CD4-positive, alpha-beta memory T cell (primary cell): ENCODE measurements at regions of chr1 and their contacts with region 1.

Region 1: GRCh38 chr1:160098852-160099561 is 588 bp upstream of the IGSF8 start:
- DNase-seq: peak; percentile 95 to 98 (median 95)
- H3K4me3 ChIP-seq: peak overlapping the region; percentile 74
- H3K4me3 Mint-ChIP-seq: peak overlapping the region; percentile 78 to 87 (median 82)
- H3K27ac ChIP-seq: peak overlapping the region; percentile 96
- H3K27ac Mint-ChIP-seq: peak overlapping the region; percentile 93 to 98 (median 97)
- H3K4me1 ChIP-seq: peaks cover 55% of the 10 kb centered on the region
- H3K4me1 Mint-ChIP-seq: peaks cover 24 to 63% (median 46%) of the 10 kb centered on the region in 4 donors
- H3K27me3 ChIP-seq: no peaks in the 10 kb centered on the region
- H3K27me3 Mint-ChIP-seq: peaks cover 0 to 2% of the 10 kb centered on the region in 2 donors

Region 2: GRCh38 chr1:159780583-159781582 is 318.1 kb before region 1 on chr1 and contains the start of gene DUSP23:
- CTCF ChIA-PET with region 1: no interaction called
- POLR2A ChIA-PET with region 1: no interaction called
- intact Hi-C with region 1: loop called (anchors 1 kb)
- DNase-seq: peak; percentile 96 to 97 (median 97)
- H3K4me3 ChIP-seq: peak within 1 kb of the TSS; percentile 39 to 57
- H3K4me3 Mint-ChIP-seq: peak within 1 kb of the TSS; percentile 83 to 93 (median 87)
- H3K27ac ChIP-seq: peak within 1 kb of the TSS; percentile 61
- H3K27ac Mint-ChIP-seq: peak within 1 kb of the TSS; percentile 81 to 96 (median 92)
- H3K4me1 ChIP-seq: peaks cover 16% of the 10 kb centered on the region
- H3K4me1 Mint-ChIP-seq: peaks cover 14 to 55% (median 36%) of the 10 kb centered on the region in 4 donors
- H3K27me3 ChIP-seq: no peaks in the 10 kb centered on the region
- H3K27me3 Mint-ChIP-seq: no peaks in the 10 kb centered on the region
- total RNA-seq, gene DUSP23: 14.5 to 15.7 TPM

Region 3: DNA sequence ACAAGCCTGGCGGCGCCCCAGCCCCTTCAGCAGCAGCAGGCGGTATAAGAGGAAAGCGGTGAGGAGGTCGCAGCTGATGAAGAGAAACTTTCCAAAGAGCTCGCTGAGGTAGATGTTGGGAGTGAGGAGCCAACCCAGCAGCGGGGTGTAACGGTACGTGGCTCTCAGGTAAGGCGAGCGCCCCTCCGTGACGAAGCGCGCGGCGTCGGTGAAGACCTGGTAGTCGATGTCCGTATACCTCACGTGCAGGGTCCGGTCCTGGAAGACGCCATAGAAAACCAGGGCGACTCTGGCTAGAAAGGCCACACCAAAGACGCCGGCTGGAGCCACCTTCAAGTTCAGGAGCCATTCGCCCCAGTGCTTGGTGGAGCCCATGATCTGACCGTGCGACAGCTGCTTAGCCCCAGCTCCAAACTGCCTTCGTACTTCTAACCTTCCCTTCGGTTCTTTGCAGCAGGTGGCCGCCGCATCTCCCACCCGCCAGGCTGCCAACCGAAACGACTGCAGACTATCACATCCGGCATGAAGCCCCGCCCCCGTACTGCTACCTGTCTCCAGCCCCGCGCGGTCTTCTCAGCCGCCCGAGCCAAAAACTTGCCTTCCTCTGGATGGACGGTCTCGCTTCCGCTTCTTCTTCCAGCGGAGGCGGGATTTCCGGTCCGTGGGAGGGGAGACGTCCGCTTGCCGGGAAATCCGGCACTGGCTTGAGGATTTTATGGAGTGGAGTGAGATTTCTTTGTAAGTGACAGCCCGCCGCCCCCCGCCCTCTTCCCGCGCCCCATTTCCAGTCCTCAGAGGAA is 67.4 kb before region 1 on chr1 and contains the start of gene PIGM:
- CTCF ChIA-PET with region 1: no interaction called
- POLR2A ChIA-PET with region 1: interaction called, 16 read pairs
- intact Hi-C with region 1: loop called (anchors 5 kb)
- DNase-seq: peak; percentile 89 to 96 (median 91)
- H3K4me3 ChIP-seq: peak within 1 kb of the TSS; percentile 71 to 79
- H3K4me3 Mint-ChIP-seq: peak within 1 kb of the TSS; percentile 94 to 99 (median 98)
- H3K27ac ChIP-seq: peak within 1 kb of the TSS; percentile 57
- H3K27ac Mint-ChIP-seq: peak within 1 kb of the TSS; percentile 89 to 98 (median 97)
- H3K4me1 ChIP-seq: peaks cover 32% of the 10 kb centered on the region
- H3K4me1 Mint-ChIP-seq: peaks cover 27 to 42% (median 33%) of the 10 kb centered on the region in 4 donors
- H3K27me3 ChIP-seq: no peaks in the 10 kb centered on the region
- H3K27me3 Mint-ChIP-seq: no peaks in the 10 kb centered on the region
- total RNA-seq, gene PIGM: 11.7 to 12.3 TPM

Region 4: GRCh38 chr1:160085686-160086455 is 13.1 kb before region 1 on chr1:
- CTCF ChIA-PET with region 1: interaction called, 83 read pairs
- POLR2A ChIA-PET with region 1: interaction called, 51 read pairs
- intact Hi-C with region 1: loop called (anchors 1 kb)
- DNase-seq: peak; percentile 66 to 68 (median 67)
- H3K4me3 ChIP-seq: no peak overlapping the region
- H3K4me3 Mint-ChIP-seq: peak overlapping the region in 3 of 8 donors; percentile 6 to 70 (median 45)
- H3K27ac ChIP-seq: no peak overlapping the region
- H3K27ac Mint-ChIP-seq: peak overlapping the region in 6 of 7 donors; percentile 51 to 88 (median 78)
- H3K4me1 ChIP-seq: peaks cover 3% of the 10 kb centered on the region
- H3K4me1 Mint-ChIP-seq: peaks cover 8 to 28% (median 19%) of the 10 kb centered on the region in 4 donors
- H3K27me3 ChIP-seq: peaks cover 18% of the 10 kb centered on the region
- H3K27me3 Mint-ChIP-seq: peaks cover 16 to 18% of the 10 kb centered on the region in 2 donors

Region 5: GRCh38 chr1:160251687-160252526 is 152.9 kb after region 1 on chr1:
- CTCF ChIA-PET with region 1: interaction called, 45 read pairs
- POLR2A ChIA-PET with region 1: interaction called, 4 read pairs
- intact Hi-C with region 1: loop called (anchors 1 kb)
- DNase-seq: peak; percentile 52 to 72 (median 56)
- H3K4me3 ChIP-seq: no peak overlapping the region
- H3K4me3 Mint-ChIP-seq: no peak overlapping the region
- H3K27ac ChIP-seq: no peak overlapping the region
- H3K27ac Mint-ChIP-seq: peak overlapping the region; percentile 2 to 90 (median 79)
- H3K4me1 ChIP-seq: peaks cover 12% of the 10 kb centered on the region
- H3K4me1 Mint-ChIP-seq: peaks cover 15 to 20% (median 18%) of the 10 kb centered on the region in 4 donors
- H3K27me3 ChIP-seq: no peaks in the 10 kb centered on the region
- H3K27me3 Mint-ChIP-seq: no peaks in the 10 kb centered on the region

Region 6: GRCh38 chr1:160284782-160285344 is 185.9 kb after region 1 on chr1 and contains the start of gene PEX19:
- CTCF ChIA-PET with region 1: interaction called, 6 read pairs
- POLR2A ChIA-PET with region 1: interaction called, 13 read pairs
- intact Hi-C with region 1: no loop called
- DNase-seq: peak; percentile 90 to 95 (median 92)
- H3K4me3 ChIP-seq: peak within 1 kb of the TSS; percentile 53 to 98
- H3K4me3 Mint-ChIP-seq: peak within 1 kb of the TSS; percentile 98 to 100 (median 99)
- H3K27ac ChIP-seq: peak within 1 kb of the TSS; percentile 81
- H3K27ac Mint-ChIP-seq: peak within 1 kb of the TSS; percentile 71 to 99 (median 98)
- H3K4me1 ChIP-seq: peaks cover 24% of the 10 kb centered on the region
- H3K4me1 Mint-ChIP-seq: peaks cover 20 to 44% (median 28%) of the 10 kb centered on the region in 4 donors
- H3K27me3 ChIP-seq: no peaks in the 10 kb centered on the region
- H3K27me3 Mint-ChIP-seq: no peaks in the 10 kb centered on the region
- total RNA-seq, gene PEX19: 53.5 to 60.6 TPM

Region 7: DNA sequence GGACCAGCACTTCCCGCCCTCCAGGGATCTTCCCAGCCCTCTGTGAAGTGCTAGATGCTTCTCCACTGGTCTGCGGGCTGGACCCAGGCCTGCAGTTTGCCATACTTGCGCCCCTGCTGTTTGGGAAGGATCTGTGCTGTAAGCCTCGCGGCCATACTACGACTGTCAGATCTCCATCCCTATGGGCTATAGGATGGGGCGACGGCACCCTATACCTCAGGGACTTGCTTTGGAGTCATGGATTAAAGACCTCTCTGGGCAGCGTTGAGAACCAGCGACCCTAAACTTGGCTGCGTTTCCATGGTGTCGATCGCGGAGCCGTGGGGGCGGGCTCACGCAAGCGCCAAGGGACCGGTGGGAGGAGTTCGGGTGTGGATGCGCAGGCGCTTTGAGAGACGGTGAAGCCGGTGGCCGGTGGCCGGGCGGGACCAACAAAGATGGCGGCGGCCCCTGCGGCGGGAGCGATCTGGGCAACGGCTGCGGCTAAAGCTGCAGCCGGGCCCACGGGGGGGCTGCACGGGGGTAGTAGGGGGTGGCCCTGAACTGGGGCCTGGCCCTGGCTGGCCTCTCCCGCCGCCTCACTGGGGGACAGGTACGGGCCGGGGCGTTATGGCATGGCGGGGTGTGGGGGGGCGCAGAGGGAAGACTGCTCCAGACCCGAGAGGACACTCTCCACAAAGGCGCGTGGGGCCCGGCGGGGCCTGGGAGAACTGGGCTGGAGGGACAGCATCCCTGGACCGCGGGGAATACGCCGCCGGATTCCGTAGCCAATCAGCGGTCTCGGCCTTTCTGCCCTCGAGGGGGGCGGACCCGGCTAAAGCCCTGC is 1060.3 kb after region 1 on chr1 and contains the start of gene USP21:
- CTCF ChIA-PET with region 1: no interaction called
- POLR2A ChIA-PET with region 1: no interaction called
- intact Hi-C with region 1: loop called (anchors 10 kb)
- DNase-seq: peak; percentile 91 to 92 (median 92)
- H3K4me3 ChIP-seq: peak within 1 kb of the TSS; percentile 83 to 93
- H3K4me3 Mint-ChIP-seq: peak within 1 kb of the TSS; percentile 91 to 99 (median 94)
- H3K27ac ChIP-seq: peak within 1 kb of the TSS; percentile 84
- H3K27ac Mint-ChIP-seq: peak within 1 kb of the TSS; percentile 94 to 99 (median 97)
- H3K4me1 ChIP-seq: peaks cover 45% of the 10 kb centered on the region
- H3K4me1 Mint-ChIP-seq: peaks cover 40 to 77% (median 61%) of the 10 kb centered on the region in 4 donors
- H3K27me3 ChIP-seq: no peaks in the 10 kb centered on the region
- H3K27me3 Mint-ChIP-seq: no peaks in the 10 kb centered on the region
- total RNA-seq, gene USP21: 62.0 to 63.6 TPM